Activated T-helper 2 cell treated with anti-CD3 and anti-CD28 coated beads, Interferon-gamma antibody, Interleukin-2, Interleukin-4, amounts not matched to agents 10 μg/mL and 5 μg/mL and 100 μg/mL, durations not matched to agents 14 hours and 24 hours and 36 hours (primary cell): ENCODE measurements at regions of chr6 and their contacts with region 1.

Region 1: GRCh38 chr6:30717042-30717844 is at the start of gene MDC1:
- DNase-seq: peak; percentile 100
- H3K4me3 Mint-ChIP-seq: peak within 1 kb of the TSS; percentile 95
- H3K27ac Mint-ChIP-seq: peak within 1 kb of the TSS; percentile 98
- H3K4me1 Mint-ChIP-seq: peaks cover 44% of the 10 kb centered on the region
- H3K27me3 Mint-ChIP-seq: no peaks in the 10 kb centered on the region
- total RNA-seq, gene MDC1: 88.3 and 96.6 TPM in 2 replicates

Region 2: GRCh38 chr6:30489081-30490025 is 227.9 kb before region 1 on chr6 and contains the start of gene HLA-E:
- intact Hi-C with region 1: loop called (anchors 5 kb)
- DNase-seq: peak; percentile 90
- H3K4me3 Mint-ChIP-seq: peak within 1 kb of the TSS; percentile 98
- H3K27ac Mint-ChIP-seq: peak within 1 kb of the TSS; percentile 97
- H3K4me1 Mint-ChIP-seq: peaks cover 51% of the 10 kb centered on the region
- H3K27me3 Mint-ChIP-seq: no peaks in the 10 kb centered on the region
- total RNA-seq, gene HLA-E: 358 and 360 TPM in 2 replicates

Region 3: DNA sequence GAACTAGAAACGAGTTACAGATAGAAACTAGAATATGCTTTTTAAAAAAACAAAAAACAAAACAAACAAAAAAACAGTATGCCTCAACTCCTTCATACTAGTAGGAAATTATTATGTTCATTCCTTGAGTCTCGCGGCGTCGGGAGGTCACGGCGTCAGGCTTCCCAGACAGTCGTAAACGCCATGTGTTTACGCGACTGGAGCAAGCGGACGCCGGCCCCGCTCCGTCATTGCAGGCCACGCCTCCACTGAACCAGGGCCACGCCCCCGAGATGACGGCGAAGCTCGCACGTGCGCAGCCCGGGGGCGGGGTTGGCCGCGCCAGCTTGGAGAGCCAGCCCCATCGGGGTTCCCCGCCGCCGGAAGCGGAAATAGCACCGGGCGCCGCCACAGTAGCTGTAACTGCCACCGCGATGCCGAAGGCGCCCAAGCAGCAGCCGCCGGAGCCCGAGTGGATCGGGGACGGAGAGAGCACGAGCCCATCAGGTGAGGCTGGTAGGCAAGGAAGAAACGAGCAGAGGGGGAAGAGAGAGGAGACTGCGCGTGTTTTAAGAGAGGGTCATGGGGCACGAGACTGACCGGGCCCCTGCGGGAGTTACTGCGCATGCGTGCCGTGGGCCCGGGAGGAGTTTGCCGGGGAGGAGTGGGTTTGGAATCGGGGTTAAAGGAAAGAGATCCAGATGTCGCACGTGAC is 146.0 kb before region 1 on chr6 and contains the start of gene ABCF1:
- intact Hi-C with region 1: loop called (anchors 5 kb)
- DNase-seq: peak; percentile 99
- H3K4me3 Mint-ChIP-seq: peak within 1 kb of the TSS; percentile 91
- H3K27ac Mint-ChIP-seq: peak within 1 kb of the TSS; percentile 92
- H3K4me1 Mint-ChIP-seq: peaks cover 56% of the 10 kb centered on the region
- H3K27me3 Mint-ChIP-seq: no peaks in the 10 kb centered on the region
- total RNA-seq, gene ABCF1: 102 and 112 TPM in 2 replicates

Region 4: GRCh38 chr6:30646458-30647241 is 70.6 kb before region 1 on chr6 and contains the start of gene C6orf136:
- intact Hi-C with region 1: loop called (anchors 1 kb)
- DNase-seq: peak; percentile 89
- H3K4me3 Mint-ChIP-seq: peak within 1 kb of the TSS; percentile 88
- H3K27ac Mint-ChIP-seq: peak within 1 kb of the TSS; percentile 89
- H3K4me1 Mint-ChIP-seq: peaks cover 18% of the 10 kb centered on the region
- H3K27me3 Mint-ChIP-seq: no peaks in the 10 kb centered on the region
- total RNA-seq, gene C6orf136: 23.1 and 28.2 TPM in 2 replicates

Region 5: GRCh38 chr6:30686908-30687658 is 30.2 kb before region 1 on chr6:
- intact Hi-C with region 1: loop called (anchors 1 kb)
- DNase-seq: peak; percentile 79
- H3K4me3 Mint-ChIP-seq: peak overlapping the region; percentile 97
- H3K27ac Mint-ChIP-seq: peak overlapping the region; percentile 93
- H3K4me1 Mint-ChIP-seq: peaks cover 33% of the 10 kb centered on the region
- H3K27me3 Mint-ChIP-seq: no peaks in the 10 kb centered on the region

Region 6: GRCh38 chr6:30877419-30878371 is 160.5 kb after region 1 on chr6:
- intact Hi-C with region 1: loop called (anchors 5 kb)
- DNase-seq: peak; percentile 64
- H3K4me3 Mint-ChIP-seq: peak overlapping the region; percentile 60
- H3K27ac Mint-ChIP-seq: peak overlapping the region; percentile 85
- H3K4me1 Mint-ChIP-seq: peaks cover 19% of the 10 kb centered on the region
- H3K27me3 Mint-ChIP-seq: no peaks in the 10 kb centered on the region